ENCODE measurements at regions of chr5 and their contacts with region 1.

Region 1: DNA sequence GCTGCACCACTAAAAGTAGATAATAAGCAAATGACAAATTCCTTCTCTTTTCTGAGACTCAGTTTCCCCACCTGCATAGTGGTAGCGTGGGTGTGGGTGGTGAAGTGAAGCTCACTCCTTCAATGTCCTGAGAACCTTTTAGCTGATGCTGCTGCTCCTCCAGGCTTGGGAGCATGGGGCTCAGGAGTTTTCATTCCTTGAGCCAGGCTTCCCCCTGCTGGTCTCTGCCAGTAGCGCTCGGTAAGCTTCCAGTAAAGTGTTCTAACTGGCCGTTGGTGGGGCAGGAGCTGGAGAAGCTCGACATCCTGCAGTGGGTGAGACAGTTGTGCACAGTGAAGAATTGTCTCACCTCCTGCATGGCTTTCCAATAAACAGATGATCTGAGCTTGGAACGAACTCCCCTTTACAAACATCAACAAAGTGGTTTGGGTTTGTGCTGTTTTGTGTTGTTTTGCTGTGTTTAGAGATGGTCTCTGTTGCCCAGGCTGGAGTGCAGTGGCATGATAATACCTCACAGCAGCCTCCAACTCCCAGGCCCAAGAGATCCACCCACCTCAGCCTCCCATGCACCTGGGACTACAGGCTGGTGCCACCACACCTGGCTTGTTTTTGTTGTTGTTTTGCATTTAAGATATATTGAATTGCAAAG is 34.6 kb downstream of the SPARC start:
- DNase-seq: peak; percentile 87
- H3K4me3 Mint-ChIP-seq: no peak overlapping the region
- H3K27ac Mint-ChIP-seq: no peak overlapping the region
- H3K4me1 Mint-ChIP-seq: peaks cover 7% of the 10 kb centered on the region
- H3K27me3 Mint-ChIP-seq: peaks cover 38% of the 10 kb centered on the region
- CTCF ChIP-seq: peak; percentile 85

Region 2: DNA sequence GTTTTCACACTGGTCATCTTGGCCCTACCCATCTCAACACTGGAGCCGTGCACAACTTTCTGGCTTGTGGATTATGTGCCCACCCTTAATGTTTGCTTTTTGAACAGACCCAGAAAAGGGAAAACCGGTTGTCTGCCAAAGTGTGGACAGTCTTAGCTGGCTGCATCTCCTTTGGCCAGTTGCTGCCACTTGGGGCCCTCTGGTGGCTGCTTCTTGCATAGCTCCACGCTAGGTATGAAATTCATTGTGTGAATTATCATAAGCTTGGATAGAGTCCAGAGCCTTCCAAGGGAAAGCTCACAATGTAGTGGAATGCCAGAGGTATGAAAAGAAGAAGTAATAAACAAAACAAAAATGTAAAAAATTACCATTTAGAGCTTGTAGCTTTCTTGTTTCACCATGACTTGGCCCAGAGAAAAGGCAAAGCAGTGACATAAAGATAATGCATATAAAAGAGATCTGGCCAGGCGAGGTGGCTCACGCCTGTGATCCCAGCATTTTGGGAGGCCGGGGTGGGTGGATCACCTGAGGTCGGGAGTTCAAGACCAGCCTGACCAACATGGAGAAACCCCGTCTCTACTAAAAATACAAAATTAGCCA is 336.0 kb before region 1 on chr5:
- CTCF ChIA-PET with region 1: interaction called, 7 read pairs
- intact Hi-C with region 1: loop called (anchors 1 kb)
- DNase-seq: peak; percentile 88
- H3K4me3 Mint-ChIP-seq: no peak overlapping the region
- H3K27ac Mint-ChIP-seq: no peak overlapping the region
- H3K4me1 Mint-ChIP-seq: no peaks in the 10 kb centered on the region
- H3K27me3 Mint-ChIP-seq: peaks cover 45% of the 10 kb centered on the region
- CTCF ChIP-seq: peak; percentile 92

Region 3: DNA sequence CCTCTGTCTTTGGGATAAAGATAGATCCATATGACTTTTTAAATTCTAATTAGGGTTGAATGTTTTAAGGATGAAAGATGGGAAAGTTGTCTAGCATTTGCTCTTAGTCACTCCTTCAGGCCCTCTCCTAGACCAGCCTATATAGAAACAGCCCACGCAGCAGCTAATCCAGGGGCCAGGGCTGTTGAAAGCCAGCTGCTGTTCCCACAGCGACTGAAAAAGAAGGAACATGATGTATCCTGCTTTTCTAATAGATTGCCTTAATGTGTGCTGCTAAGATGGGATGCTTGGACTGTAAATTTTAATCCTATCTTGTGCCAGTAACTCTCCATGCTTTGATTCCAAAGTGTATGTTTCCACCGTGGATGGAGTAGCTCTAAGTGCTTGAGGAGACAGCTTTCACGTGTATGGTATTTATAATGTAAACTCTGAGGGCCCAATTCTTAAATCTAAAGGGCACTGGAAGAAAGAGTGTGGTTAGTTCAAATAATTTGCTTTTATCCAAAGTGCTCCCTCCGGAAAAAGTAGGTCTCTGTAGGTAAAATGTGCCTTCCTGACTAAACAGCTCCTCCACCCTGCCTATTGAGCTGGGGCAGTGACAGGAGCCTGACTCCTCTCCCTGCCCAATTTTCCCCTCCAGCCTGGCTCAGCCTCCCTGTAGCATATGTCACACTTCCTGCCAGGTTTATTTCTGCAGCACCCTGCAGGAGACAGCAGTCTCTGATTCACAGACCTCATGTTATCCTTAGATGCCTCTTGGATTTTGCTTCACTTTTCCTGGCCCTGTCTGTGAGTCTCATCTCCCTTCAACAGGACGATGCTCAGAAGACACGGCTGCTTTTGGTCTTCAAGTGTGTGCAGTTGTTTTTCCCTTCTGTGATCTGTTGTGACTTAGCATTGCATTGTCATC is 171.5 kb before region 1 on chr5:
- CTCF ChIA-PET with region 1: no interaction called
- intact Hi-C with region 1: no loop called
- DNase-seq: no peak
- H3K4me3 Mint-ChIP-seq: no peak overlapping the region
- H3K27ac Mint-ChIP-seq: no peak overlapping the region
- H3K4me1 Mint-ChIP-seq: no peaks in the 10 kb centered on the region
- H3K27me3 Mint-ChIP-seq: no peaks in the 10 kb centered on the region
- CTCF ChIP-seq: no peak

Region 4: GRCh38 chr5:151499501-151500035 is 152.6 kb before region 1 on chr5:
- CTCF ChIA-PET with region 1: interaction called, 3 read pairs
- intact Hi-C with region 1: loop called (anchors 2 kb)
- DNase-seq: no peak
- H3K4me3 Mint-ChIP-seq: no peak overlapping the region
- H3K27ac Mint-ChIP-seq: no peak overlapping the region
- H3K4me1 Mint-ChIP-seq: no peaks in the 10 kb centered on the region
- H3K27me3 Mint-ChIP-seq: no peaks in the 10 kb centered on the region
- CTCF ChIP-seq: no peak

Region 5: GRCh38 chr5:151592855-151593408 is 59.2 kb before region 1 on chr5:
- CTCF ChIA-PET with region 1: no interaction called
- intact Hi-C with region 1: no loop called
- DNase-seq: peak; percentile 66
- H3K4me3 Mint-ChIP-seq: no peak overlapping the region
- H3K27ac Mint-ChIP-seq: no peak overlapping the region
- H3K4me1 Mint-ChIP-seq: peaks cover 26% of the 10 kb centered on the region
- H3K27me3 Mint-ChIP-seq: peaks cover 62% of the 10 kb centered on the region
- CTCF ChIP-seq: no peak

Region 6: GRCh38 chr5:151628112-151628823 is 23.9 kb before region 1 on chr5:
- CTCF ChIA-PET with region 1: interaction called, 13 read pairs
- intact Hi-C with region 1: no loop called
- DNase-seq: no peak
- H3K4me3 Mint-ChIP-seq: no peak overlapping the region
- H3K27ac Mint-ChIP-seq: no peak overlapping the region
- H3K4me1 Mint-ChIP-seq: peaks cover 11% of the 10 kb centered on the region
- H3K27me3 Mint-ChIP-seq: peaks cover 98% of the 10 kb centered on the region
- CTCF ChIP-seq: no peak

Region 7: GRCh38 chr5:151771259-151772028 is 119.3 kb after region 1 on chr5 and contains the start of gene G3BP1:
- CTCF ChIA-PET with region 1: interaction called, 10 read pairs
- intact Hi-C with region 1: no loop called
- DNase-seq: peak; percentile 100
- H3K4me3 Mint-ChIP-seq: no peak within 1 kb of the TSS
- H3K27ac Mint-ChIP-seq: no peak within 1 kb of the TSS
- H3K4me1 Mint-ChIP-seq: peaks cover 15% of the 10 kb centered on the region
- H3K27me3 Mint-ChIP-seq: no peaks in the 10 kb centered on the region
- CTCF ChIP-seq: peak; percentile 32
- total RNA-seq, gene G3BP1: 356 and 393 TPM in 2 replicates

Measured in Calu3 (cell line).